ENCODE measurements at regions of chr3 and their contacts with region 1.

Region 1: DNA sequence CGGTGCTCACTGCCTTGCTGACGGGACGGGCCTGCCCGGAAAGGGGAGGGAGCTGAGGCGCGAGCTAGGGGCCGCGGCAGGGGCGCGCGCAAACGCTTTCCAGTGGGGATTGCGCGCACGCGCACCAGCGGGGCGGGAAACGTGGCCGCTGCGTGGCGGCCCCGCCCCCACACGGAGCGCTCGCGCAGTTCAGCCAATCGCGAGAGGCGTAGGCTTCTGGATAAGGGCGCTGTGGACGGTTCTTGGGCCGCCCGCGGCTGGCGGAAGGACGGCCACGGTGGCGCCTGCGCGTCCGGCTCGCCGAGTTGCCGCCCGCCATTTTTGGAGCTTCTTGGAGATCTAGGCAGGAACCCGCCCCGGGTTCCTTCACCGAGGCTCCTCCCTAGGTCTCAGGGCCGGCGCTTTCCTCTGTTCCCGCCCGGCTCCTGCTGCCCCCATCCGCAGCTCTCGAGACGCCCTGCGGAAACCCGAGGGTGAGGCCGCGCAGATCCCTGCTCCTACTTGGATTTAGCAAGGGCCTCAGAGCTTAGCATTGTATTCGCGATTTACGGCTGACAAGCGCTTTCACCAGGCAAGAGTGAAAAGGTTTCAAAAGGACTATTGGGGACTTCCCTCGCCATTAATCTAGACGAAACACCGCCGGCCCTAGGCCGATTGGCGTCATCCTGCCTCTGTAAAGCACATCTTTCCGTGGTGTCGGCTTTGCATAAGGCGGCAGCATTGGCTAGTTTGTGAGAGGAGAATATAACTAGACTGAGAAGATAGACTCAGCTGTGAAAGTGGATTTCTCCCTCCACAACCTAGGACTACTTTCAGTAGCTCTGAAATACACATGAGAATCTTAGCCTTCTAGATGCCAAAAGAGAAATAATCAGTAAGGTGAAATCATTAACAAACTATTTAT is 496 bp upstream of the STAG1 start:
- DNase-seq: peak; percentile 99
- H3K4me3 ChIP-seq: peak overlapping the region; percentile 80 to 82 (median 82)
- H3K27ac ChIP-seq: peak overlapping the region; percentile 99
- H3K4me1 ChIP-seq: peaks cover 19% of the 10 kb centered on the region
- H3K27me3 ChIP-seq: no peaks in the 10 kb centered on the region
- CTCF ChIP-seq: peak in 1 of 2 donors; percentile 96
- POLR2A ChIP-seq: peak; percentile 84

Region 2: GRCh38 chr3:136075218-136075808 is 677.4 kb before region 1 on chr3:
- CTCF ChIA-PET with region 1: interaction called, 93 read pairs
- POLR2A ChIA-PET with region 1: interaction called, 5 read pairs
- dilution Hi-C with region 1: no loop called
- intact Hi-C with region 1: loop called (anchors 1 kb)
- DNase-seq: peak; percentile 81
- H3K4me3 ChIP-seq: no peak overlapping the region
- H3K27ac ChIP-seq: no peak overlapping the region
- H3K4me1 ChIP-seq: no peaks in the 10 kb centered on the region
- H3K27me3 ChIP-seq: no peaks in the 10 kb centered on the region
- CTCF ChIP-seq: peak; percentile 63 to 76
- POLR2A ChIP-seq: no peak

Region 3: GRCh38 chr3:136305878-136306277 is 446.8 kb before region 1 on chr3:
- CTCF ChIA-PET with region 1: interaction called, 138 read pairs
- POLR2A ChIA-PET with region 1: interaction called, 3 read pairs
- dilution Hi-C with region 1: no loop called
- intact Hi-C with region 1: no loop called
- DNase-seq: peak; percentile 61
- H3K4me3 ChIP-seq: no peak overlapping the region
- H3K27ac ChIP-seq: no peak overlapping the region
- H3K4me1 ChIP-seq: no peaks in the 10 kb centered on the region
- H3K27me3 ChIP-seq: no peaks in the 10 kb centered on the region
- CTCF ChIP-seq: peak in 1 of 2 donors; percentile 39
- POLR2A ChIP-seq: no peak

Region 4: GRCh38 chr3:136350132-136350531 is 402.5 kb before region 1 on chr3:
- CTCF ChIA-PET with region 1: interaction called, 27 read pairs
- POLR2A ChIA-PET with region 1: no interaction called
- dilution Hi-C with region 1: no loop called
- intact Hi-C with region 1: no loop called
- DNase-seq: no peak
- H3K4me3 ChIP-seq: no peak overlapping the region
- H3K27ac ChIP-seq: no peak overlapping the region
- H3K4me1 ChIP-seq: no peaks in the 10 kb centered on the region
- H3K27me3 ChIP-seq: no peaks in the 10 kb centered on the region
- CTCF ChIP-seq: no peak
- POLR2A ChIP-seq: no peak

Region 5: DNA sequence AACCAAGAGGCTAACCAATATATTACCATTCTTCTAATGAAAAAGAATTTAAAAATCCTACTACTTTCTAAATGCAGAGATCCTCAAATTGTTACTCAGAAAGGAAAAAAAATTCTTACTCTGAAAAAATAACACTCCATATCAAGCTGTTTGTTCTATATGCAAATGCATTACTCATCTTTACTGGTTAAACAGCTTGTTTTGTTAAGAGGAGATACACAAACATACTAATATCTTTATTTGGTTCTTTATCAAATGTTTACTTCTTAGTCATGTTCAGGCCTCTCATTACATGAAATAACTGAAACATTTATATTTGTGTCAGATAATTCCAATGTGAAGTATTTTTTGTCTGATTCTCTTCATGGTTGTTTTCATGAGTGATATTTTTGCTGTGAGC is 355.8 kb before region 1 on chr3:
- CTCF ChIA-PET with region 1: interaction called, 253 read pairs
- POLR2A ChIA-PET with region 1: interaction called, 17 read pairs
- dilution Hi-C with region 1: no loop called
- intact Hi-C with region 1: no loop called
- DNase-seq: peak; percentile 28
- H3K4me3 ChIP-seq: no peak overlapping the region
- H3K27ac ChIP-seq: no peak overlapping the region
- H3K4me1 ChIP-seq: peaks cover 6% of the 10 kb centered on the region
- H3K27me3 ChIP-seq: no peaks in the 10 kb centered on the region
- CTCF ChIP-seq: no peak
- POLR2A ChIP-seq: no peak

Region 6: GRCh38 chr3:136818769-136819391 is 66.2 kb after region 1 on chr3 and contains the start of gene SLC35G2:
- CTCF ChIA-PET with region 1: interaction called, 6 read pairs
- POLR2A ChIA-PET with region 1: interaction called, 5 read pairs
- dilution Hi-C with region 1: no loop called
- intact Hi-C with region 1: loop called (anchors 1 kb)
- DNase-seq: peak; percentile 84
- H3K4me3 ChIP-seq: peak within 1 kb of the TSS; percentile 31 to 78 (median 77)
- H3K27ac ChIP-seq: peak within 1 kb of the TSS; percentile 97
- H3K4me1 ChIP-seq: peaks cover 16% of the 10 kb centered on the region
- H3K27me3 ChIP-seq: no peaks in the 10 kb centered on the region
- CTCF ChIP-seq: no peak
- POLR2A ChIP-seq: no peak
- total RNA-seq, gene SLC35G2: 17.7 and 19.4 TPM in 2 replicates

Region 7: DNA sequence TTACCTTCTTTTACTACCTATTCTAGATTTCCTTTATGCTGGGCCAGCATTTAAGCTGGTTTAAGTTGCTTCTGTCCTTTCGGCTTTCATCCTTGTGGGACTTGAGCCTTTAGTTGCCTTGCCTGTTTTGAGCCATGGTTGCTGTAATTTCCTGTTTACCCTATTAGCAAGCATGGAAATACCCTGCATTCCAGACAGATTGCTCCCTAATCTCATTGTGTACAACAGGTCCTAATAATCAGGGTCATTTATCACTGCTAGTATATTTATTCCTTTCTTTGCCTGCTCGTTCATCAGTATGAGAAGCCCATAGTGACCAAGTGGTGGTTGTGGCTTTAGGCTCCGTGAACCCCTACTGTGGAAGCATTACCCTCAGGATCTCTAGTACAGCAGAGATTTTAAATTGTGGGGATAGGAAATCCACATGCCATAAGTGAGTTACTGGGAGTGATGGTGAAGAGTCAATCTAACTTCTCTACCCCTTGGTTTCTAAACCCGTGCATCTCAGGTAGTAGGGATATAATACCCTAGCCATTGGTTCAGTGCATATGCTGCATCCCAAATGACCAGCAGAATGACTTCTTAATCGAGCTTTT is 141.3 kb after region 1 on chr3:
- CTCF ChIA-PET with region 1: interaction called, 5 read pairs
- POLR2A ChIA-PET with region 1: no interaction called
- dilution Hi-C with region 1: no loop called
- intact Hi-C with region 1: loop called (anchors 10 kb)
- DNase-seq: peak; percentile 94
- H3K4me3 ChIP-seq: peak overlapping the region in 1 of 3 experiments; percentile 3
- H3K27ac ChIP-seq: peak overlapping the region; percentile 92
- H3K4me1 ChIP-seq: peaks cover 40% of the 10 kb centered on the region
- H3K27me3 ChIP-seq: no peaks in the 10 kb centered on the region
- CTCF ChIP-seq: no peak
- POLR2A ChIP-seq: no peak

Measured in endothelial cell of umbilical vein (primary cell).